ENCODE measurements at regions of chr16 and their contacts with region 1.

Region 1: DNA sequence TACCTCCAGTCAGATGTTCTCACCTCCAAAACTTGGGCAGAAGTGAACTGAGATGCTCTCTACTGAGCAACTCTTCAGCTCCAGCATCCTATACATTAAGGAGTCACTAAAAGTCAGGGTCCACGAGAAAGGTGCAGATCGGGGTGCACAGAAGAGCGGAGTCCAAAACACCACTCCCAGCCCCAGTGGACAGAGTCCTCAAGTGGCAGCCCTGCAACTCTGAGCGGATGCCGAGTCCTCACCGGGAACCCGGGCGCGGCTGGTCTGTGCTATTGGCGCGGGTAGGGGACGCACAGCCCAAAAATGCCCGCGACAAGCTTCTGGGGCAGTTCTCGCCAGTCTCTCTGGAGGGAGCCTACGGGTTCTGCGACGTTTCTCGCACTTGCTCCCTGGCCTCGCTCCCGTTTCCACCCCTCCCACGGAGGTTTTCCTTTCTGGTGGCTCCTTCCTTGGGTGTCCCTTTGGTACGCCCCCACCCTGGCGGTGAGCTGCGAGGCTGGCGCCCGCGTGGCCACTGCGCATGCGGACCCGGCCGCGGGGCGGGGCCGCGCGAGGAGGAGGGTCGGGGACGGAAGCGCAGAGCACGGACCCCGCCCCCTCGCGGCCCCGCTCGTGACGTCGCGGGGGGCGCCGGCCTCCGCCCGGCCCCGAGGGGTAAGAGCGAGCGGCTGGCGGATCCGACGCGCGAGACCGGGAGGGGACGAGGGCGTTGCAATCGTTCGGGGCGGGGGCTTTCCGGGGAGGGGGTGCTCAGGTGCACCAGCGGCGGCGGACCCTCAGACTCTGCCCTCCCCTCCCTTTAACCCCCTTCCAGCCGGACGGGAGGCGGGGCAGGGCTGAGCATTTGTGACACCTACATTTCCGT is at the start of gene TMEM219:
- H3K4me3 ChIP-seq: peak within 1 kb of the TSS; percentile 57
- H3K27ac ChIP-seq: peak within 1 kb of the TSS; percentile 44; the same call in 1 of the 2 replicates
- H3K4me1 ChIP-seq: 0 out of 2 replicates have a peak, but pooled peaks cover 3% of the 10 kb centered on the region
- CTCF ChIP-seq: peak; percentile 94

Region 2: GRCh38 chr16:29943846-29944669 is 17.7 kb before region 1 on chr16:
- CTCF ChIA-PET with region 1: interaction called, 16 read pairs
- POLR2A ChIA-PET with region 1: interaction called, 24 read pairs
- H3K4me3 ChIP-seq: peak overlapping the region; percentile 24
- H3K27ac ChIP-seq: peak overlapping the region; percentile 60
- H3K4me1 ChIP-seq: peaks cover 7% of the 10 kb centered on the region; the same call in 1 of the 2 replicates
- CTCF ChIP-seq: peak; percentile 87

Region 3: DNA sequence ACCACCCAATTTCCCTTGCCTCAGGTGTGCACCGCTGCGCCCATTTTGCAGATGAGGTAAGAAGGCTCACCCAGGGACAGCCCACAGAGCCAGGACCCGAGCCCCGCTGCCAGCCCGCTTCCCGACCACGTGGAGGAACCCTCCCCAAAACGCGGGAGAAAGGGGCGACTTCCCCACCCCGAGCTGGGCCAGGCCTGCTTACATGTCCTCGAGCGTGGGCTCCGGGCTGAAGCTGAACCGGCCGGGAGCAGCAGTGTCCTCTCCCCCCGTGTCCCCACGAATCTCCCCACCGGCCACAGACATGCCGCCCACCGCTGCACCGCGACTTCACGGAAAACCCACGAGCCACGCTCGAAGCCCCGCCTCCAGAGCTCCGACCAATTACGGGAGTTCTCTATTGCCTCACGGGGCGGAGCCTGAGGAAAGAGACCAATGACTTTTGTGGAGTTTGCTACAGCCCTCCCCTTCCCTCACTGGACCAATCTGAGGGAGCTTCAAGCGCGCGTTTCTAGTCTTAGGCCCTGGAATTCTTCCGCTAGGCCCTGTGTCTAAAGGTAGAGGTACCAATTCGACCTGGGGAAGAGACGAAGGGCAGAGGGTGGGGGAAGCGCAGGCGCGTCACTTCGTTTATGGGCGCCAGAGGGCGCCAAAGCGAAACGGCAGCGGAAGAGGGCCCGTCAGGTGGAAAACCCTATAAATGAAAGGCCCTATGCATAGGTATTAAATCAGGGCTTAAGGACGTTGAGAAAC is 468.1 kb after region 1 on chr16 and contains the start of gene DCTPP1:
- CTCF ChIA-PET with region 1: no interaction called
- POLR2A ChIA-PET with region 1: no interaction called
- H3K4me3 ChIP-seq: peak within 1 kb of the TSS; percentile 76
- H3K27ac ChIP-seq: peak within 1 kb of the TSS; percentile 12; the same call in 1 of the 2 replicates
- H3K4me1 ChIP-seq: no peaks in the 10 kb centered on the region
- CTCF ChIP-seq: peak; percentile 99